A549 (cell line): ENCODE measurements at regions of chr1 and their contacts with region 1.

Region 1: DNA sequence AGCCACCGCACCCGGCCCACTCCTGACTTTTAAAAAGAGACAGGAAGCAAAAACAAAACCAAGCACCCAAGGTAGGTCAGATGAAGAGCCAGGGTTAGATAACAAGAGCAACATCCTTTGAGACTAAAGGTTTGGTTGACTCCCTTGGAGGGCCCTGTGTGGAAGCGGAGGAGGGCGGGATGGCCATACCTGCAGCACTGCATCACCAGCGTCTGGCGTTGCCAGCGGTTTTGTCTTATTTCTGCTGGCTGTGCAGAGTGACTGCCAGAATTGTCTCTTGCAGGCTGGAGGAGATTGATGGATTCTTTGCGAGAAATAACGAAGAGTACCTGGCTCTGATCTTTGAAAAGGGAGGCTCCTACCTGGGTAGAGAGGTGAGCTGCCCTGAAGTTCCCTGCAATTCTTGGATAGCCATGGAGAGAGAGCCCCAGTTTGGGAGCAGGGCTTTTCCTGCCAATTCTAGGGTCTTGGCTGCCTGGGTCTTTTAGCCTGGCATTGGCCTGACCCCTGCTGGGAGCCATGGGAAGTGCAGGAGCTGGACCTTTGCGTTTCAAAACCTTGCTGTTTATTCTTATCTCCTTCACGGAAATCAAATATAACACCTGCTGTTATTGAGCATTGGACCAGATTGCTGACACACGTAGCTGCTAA is 24.0 kb downstream of the QSOX1 start:
- DNase-seq: peak; percentile 53 to 82
- ATAC-seq: peak; percentile 27 to 76; a peak in 4 of 6 replicates
- H3K4me3 ChIP-seq: no peak overlapping the region
- H3K27ac ChIP-seq: no peak overlapping the region
- H3K4me1 ChIP-seq: no peaks in the 10 kb centered on the region
- CTCF ChIP-seq: peak; percentile 94
- EP300 ChIP-seq: no peak
- POLR2A ChIP-seq: no peak
- RAD21 ChIP-seq: peak; percentile 93 to 95

Region 2: GRCh38 chr1:179853102-179853501 is 325.5 kb before region 1 on chr1:
- CTCF ChIA-PET with region 1: no interaction called
- POLR2A ChIA-PET with region 1: no interaction called
- DNase-seq: no peak
- ATAC-seq: no peak
- H3K4me3 ChIP-seq: no peak overlapping the region
- H3K27ac ChIP-seq: no peak overlapping the region
- H3K4me1 ChIP-seq: no peaks in the 10 kb centered on the region
- CTCF ChIP-seq: no peak
- EP300 ChIP-seq: no peak
- POLR2A ChIP-seq: no peak
- RAD21 ChIP-seq: no peak

Region 3: DNA sequence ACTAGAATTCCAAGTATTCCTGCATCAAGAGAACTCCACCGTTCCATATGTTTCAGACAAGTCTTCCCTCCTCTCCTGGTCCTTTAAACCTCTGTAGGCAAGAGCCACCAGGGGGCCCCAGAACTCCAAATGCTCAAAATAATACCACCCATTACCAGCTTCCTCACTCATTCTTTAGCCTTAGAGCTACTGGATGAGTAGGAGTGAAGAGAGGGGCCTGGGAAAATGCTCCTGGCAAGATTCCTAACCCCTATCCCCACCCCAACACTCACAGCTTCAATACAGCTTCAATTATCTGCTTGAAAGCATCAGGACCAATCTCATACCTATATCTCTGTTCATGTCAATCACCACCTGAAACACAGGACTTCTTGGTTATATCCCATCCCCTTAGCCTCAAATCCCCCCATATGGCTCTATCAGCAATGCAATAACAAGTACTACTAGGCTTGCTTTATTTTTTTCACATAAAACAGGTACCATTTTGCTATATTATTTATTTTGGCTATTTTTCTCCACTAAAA is 310.8 kb before region 1 on chr1:
- CTCF ChIA-PET with region 1: interaction called, 92 read pairs
- POLR2A ChIA-PET with region 1: no interaction called
- DNase-seq: peak; percentile 54 to 64
- ATAC-seq: peak; percentile 96 to 98
- H3K4me3 ChIP-seq: no peak overlapping the region
- H3K27ac ChIP-seq: no peak overlapping the region
- H3K4me1 ChIP-seq: peaks cover under 1% of the 10 kb centered on the region; the same call in 1 of the 3 replicates
- CTCF ChIP-seq: peak; percentile 81
- EP300 ChIP-seq: no peak
- POLR2A ChIP-seq: no peak
- RAD21 ChIP-seq: peak; percentile 75

Region 4: DNA sequence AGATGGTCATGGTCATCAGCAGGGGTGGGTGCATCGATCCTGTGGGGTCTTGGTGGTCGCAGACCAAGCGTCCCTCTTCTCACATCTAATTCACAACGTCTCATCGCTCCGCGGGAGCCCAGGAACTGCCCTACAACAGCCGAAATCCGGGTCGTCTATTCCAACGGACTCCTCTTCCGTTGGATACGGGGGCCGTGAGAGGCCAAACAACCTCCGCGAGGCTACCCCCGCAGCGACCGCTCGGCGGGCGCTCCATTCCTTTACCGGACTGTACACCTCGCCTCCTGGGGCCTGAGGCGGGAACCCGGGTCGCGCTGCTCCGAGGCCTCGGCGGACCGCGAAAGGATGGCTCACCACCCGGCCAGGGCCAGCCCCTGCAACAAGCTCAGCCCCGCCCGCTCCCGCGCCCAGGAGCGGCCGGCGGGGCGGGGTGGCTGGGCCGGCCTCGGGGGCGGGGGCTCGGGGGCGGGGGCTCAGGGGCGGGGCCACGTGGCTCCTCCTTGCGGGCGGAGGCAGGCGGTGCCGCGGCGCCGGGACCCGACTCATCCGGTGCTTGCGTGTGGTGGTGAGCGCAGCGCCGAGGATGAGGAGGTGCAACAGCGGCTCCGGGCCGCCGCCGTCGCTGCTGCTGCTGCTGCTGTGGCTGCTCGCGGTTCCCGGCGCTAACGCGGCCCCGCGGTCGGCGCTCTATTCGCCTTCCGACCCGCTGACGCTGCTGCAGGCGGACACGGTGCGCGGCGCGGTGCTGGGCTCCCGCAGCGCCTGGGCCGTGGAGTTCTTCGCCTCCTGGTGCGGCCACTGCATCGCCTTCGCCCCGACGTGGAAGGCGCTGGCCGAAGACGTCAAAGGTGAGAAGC is 24.1 kb before region 1 on chr1 and contains the start of gene QSOX1:
- CTCF ChIA-PET with region 1: interaction called, 26 read pairs
- POLR2A ChIA-PET with region 1: no interaction called
- DNase-seq: peak; percentile 86 to 91
- ATAC-seq: peak; percentile 86 to 89
- H3K4me3 ChIP-seq: peak within 1 kb of the TSS; percentile 90
- H3K27ac ChIP-seq: peak within 1 kb of the TSS; percentile 96 to 97
- H3K4me1 ChIP-seq: peaks cover 34% of the 10 kb centered on the region
- CTCF ChIP-seq: no peak
- EP300 ChIP-seq: no peak
- POLR2A ChIP-seq: peak; percentile 95
- RAD21 ChIP-seq: no peak; a peak in 1 of 5 replicates
- polyA plus RNA-seq, gene QSOX1: 60.2 and 67.3 TPM in 2 replicates

Region 5: DNA sequence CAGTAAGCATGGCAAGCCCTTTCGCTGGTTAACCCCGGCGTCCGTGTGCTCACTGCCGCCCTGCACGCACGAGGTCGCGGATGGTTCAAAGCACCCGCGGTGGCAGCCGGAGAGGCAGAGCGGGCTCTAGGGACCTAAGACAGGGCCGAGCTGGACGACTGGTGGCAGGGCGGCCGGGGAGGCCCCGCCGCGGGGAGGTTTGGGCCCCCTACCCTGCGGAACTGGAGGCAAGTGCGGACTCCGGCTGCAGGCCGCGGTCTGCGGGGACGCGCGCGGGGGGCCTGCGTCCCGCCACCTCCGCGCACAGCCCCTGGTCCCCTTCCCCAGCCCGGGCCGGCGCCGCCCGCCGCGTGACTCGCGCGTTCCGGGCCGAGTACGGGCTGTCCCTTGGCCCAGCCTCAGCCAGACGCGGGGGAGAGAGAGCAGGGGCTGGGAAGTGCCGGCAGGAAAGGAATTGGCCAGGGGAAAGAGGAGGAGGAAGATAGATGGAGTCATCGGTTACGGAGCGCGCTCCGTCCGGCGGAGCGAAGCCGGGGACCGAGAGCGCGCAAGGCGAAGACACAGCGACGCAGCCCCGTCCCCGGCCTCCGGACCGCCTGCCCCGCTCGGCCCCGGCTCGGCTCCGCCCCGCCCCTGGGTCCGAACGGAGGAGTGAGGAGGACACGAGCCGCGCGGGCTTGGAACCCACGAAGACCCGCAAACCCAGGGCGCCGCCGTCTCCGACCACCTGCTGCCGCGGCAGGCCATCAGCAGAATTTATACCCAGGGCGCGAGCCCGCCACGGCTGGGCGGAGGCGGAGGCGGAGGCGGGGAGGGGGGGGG is 50.7 kb after region 1 on chr1:
- CTCF ChIA-PET with region 1: interaction called, 18 read pairs
- POLR2A ChIA-PET with region 1: no interaction called
- DNase-seq: peak; percentile 65 to 69
- ATAC-seq: peak; percentile 54 to 57
- H3K4me3 ChIP-seq: peak overlapping the region; percentile 70
- H3K27ac ChIP-seq: peak overlapping the region; percentile 69 to 87
- H3K4me1 ChIP-seq: peaks cover 4% of the 10 kb centered on the region; the same call in 2 of the 3 replicates
- CTCF ChIP-seq: no peak
- EP300 ChIP-seq: no peak
- POLR2A ChIP-seq: peak; percentile 39
- RAD21 ChIP-seq: no peak